Activated CD4-positive, alpha-beta memory T cell treated with anti-CD3 and anti-CD28 coated beads for 36 hours (primary cell): ENCODE measurements at regions of chr20 and their contacts with region 1.

Region 1: DNA sequence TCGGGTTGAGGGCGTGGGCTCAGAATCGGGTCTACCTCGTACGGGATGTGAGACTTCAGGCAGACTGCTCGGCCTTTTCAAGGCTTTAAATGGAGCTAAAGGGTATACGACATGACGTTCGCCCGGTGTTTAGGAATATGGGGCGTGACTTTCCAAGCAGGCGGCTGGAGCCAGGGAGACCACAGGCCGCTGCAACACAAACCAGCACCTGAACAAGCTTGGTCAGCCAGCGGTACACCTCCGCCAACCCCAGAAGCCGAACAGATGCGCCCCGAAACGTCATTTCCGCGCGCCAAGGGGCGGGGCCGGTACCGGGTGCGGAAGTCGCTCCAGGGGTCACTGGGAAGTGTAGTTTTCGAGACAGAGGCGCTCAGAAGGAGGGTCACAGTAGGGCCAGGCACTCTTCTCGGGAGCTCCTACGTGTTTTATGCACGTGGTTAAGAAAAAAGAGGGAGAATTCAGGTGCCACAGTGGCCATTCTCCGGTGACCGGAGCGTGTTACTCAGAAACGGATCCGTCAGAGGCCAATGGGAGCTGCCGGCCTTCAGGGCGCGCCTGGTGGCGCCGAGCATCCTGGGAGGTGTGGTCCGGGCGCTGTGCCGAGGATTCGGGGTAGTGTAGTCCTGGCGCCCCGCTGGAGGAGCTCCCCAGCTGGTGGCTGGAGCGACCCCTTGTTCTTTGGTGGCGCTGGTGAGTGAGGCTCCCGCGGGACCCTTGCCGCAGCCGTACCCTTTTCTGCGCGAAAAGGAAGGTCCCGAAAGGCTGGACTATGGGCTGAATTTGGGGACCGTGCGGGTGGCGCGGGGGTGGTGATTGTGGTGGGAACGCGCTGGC is at the start of gene ZNF133:
- DNase-seq: peak; percentile 98
- H3K4me3 Mint-ChIP-seq: peak within 1 kb of the TSS; percentile 96
- H3K27ac Mint-ChIP-seq: peak within 1 kb of the TSS; percentile 98
- H3K4me1 Mint-ChIP-seq: peaks cover 14% of the 10 kb centered on the region
- H3K27me3 Mint-ChIP-seq: peaks cover 17% of the 10 kb centered on the region
- total RNA-seq, gene ZNF133: 7.5 to 9.0 TPM

Region 2: GRCh38 chr20:18056174-18057100 is 231.7 kb before region 1 on chr20:
- CTCF ChIA-PET with region 1: no interaction called
- POLR2A ChIA-PET with region 1: no interaction called
- intact Hi-C with region 1: loop called (anchors 10 kb)
- DNase-seq: peak; percentile 9
- H3K4me3 Mint-ChIP-seq: peak overlapping the region; percentile 45
- H3K27ac Mint-ChIP-seq: no peak overlapping the region
- H3K4me1 Mint-ChIP-seq: peaks cover 10% of the 10 kb centered on the region
- H3K27me3 Mint-ChIP-seq: peaks cover 59% of the 10 kb centered on the region

Region 3: DNA sequence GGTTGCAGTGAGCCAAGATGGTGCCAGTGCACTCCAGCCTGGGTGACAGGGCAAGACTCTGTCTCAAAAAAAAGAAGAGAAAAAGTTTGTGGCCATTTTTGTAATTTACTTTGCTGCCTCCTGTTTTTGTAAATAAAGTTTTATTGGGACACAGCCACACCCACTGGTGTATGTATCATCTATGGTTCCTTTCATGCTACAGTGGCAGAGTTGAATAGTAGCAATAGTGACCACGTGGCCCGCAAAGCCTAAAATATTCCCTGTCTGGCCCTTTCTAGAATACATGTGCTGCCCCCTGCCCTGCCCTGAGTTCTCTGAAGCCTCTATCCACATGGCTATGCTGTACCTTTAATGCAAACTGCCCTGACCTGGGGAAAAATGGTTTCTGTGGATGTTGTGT is 75.1 kb before region 1 on chr20:
- CTCF ChIA-PET with region 1: no interaction called
- POLR2A ChIA-PET with region 1: no interaction called
- intact Hi-C with region 1: no loop called
- DNase-seq: no peak
- H3K4me3 Mint-ChIP-seq: no peak overlapping the region
- H3K27ac Mint-ChIP-seq: no peak overlapping the region
- H3K4me1 Mint-ChIP-seq: no peaks in the 10 kb centered on the region
- H3K27me3 Mint-ChIP-seq: no peaks in the 10 kb centered on the region

Region 4: GRCh38 chr20:18250217-18250616 is 37.9 kb before region 1 on chr20:
- CTCF ChIA-PET with region 1: no interaction called
- POLR2A ChIA-PET with region 1: no interaction called
- intact Hi-C with region 1: no loop called
- DNase-seq: no peak
- H3K4me3 Mint-ChIP-seq: no peak overlapping the region
- H3K27ac Mint-ChIP-seq: no peak overlapping the region
- H3K4me1 Mint-ChIP-seq: no peaks in the 10 kb centered on the region
- H3K27me3 Mint-ChIP-seq: peaks cover 3% of the 10 kb centered on the region

Region 5: DNA sequence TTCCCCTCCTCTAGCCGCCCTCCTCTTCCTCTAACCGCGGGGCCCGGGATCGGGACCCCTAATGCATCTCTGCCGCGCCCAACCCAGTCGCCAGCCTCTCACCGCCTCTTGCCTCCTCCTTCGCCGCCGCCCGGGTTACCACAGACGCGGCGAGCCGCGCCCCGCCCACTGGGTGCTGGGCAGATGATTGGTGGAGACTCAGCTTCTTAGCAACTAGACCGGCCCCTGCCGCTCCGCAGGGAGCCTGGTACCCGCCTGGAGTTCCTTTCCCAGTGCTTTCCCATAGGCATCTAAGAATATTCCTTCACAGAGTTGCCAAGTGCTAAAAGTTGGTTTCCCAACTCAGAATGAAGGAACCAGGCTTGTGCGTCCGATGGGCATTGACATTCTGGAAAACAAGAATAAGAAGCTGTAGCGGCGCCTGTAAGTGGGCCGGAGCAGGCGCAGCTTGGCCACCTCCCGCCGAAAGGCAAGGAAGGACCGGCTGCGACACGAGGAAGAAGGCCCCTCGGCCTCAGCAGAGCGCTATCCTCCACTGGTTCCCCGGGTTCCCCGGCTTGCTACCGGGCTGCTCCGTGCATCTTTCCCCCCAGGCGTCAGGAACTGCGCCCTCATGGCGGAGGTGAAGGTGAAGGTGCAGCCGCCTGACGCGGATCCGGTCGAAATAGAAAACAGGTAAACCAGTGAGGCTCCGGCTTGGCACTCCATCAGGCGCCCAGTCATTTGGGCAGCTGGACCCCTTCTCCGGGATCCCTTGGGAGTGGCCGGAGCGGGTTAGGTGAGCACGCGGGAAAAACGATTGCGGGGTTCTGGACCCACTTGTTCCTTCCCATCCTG is 179.0 kb after region 1 on chr20 and contains the starts of genes DZANK1 and POLR3F:
- CTCF ChIA-PET with region 1: no interaction called
- POLR2A ChIA-PET with region 1: no interaction called
- intact Hi-C with region 1: loop called (anchors 1 kb)
- DNase-seq: peak; percentile 96
- H3K4me3 Mint-ChIP-seq: peak within 1 kb of the TSS; percentile 95
- H3K27ac Mint-ChIP-seq: peak within 1 kb of the TSS; percentile 87
- H3K4me1 Mint-ChIP-seq: peaks cover 23% of the 10 kb centered on the region
- H3K27me3 Mint-ChIP-seq: no peaks in the 10 kb centered on the region
- total RNA-seq, gene DZANK1: 1.4 to 1.6 TPM
- total RNA-seq, gene POLR3F: 11.0 to 11.3 TPM

Region 6: DNA sequence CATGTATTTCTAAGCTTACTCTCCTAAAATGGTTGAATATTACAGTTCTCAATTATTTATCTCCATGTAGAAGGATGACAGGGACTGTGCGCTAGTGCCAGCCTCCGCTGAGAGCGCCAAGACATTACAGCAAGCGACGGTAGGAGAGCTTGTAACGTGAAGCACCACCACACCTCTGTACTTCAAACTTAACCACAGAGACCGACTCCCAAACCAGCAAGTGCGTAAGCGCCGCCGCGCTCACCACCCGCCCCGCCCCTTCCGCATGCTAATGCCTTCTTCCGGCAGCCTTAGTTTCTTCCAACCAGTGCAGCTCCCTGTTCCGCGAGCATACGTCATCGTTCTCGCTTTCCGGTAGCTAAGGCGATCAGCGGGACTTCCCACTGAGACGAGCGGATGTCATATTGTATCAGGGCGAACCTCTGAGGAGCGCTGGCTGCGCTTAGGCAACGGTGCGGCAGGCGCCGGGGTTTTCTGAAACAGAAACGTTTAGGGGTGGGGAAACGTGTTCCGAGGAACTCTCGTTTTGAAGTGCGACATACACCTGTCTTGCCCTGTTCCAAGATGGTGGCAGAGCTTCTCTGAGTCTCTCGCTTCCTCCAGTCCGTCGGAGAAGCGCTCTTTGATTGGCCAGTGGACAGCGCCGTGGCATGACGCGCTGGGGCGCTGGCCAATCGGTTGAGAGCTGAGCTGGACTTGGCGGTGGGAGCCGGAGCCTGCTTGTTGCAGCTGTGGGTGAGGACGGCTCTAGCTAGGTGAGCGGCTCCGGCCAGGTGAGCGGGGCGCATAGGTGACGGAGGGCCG is 219.3 kb after region 1 on chr20 and contains the start of gene SEC23B:
- CTCF ChIA-PET with region 1: no interaction called
- POLR2A ChIA-PET with region 1: no interaction called
- intact Hi-C with region 1: loop called (anchors 1 kb)
- DNase-seq: peak; percentile 99
- H3K4me3 Mint-ChIP-seq: peak within 1 kb of the TSS; percentile 96
- H3K27ac Mint-ChIP-seq: peak within 1 kb of the TSS; percentile 97
- H3K4me1 Mint-ChIP-seq: peaks cover 40% of the 10 kb centered on the region
- H3K27me3 Mint-ChIP-seq: no peaks in the 10 kb centered on the region
- total RNA-seq, gene SEC23B: 90.6 to 97.1 TPM

Region 7: DNA sequence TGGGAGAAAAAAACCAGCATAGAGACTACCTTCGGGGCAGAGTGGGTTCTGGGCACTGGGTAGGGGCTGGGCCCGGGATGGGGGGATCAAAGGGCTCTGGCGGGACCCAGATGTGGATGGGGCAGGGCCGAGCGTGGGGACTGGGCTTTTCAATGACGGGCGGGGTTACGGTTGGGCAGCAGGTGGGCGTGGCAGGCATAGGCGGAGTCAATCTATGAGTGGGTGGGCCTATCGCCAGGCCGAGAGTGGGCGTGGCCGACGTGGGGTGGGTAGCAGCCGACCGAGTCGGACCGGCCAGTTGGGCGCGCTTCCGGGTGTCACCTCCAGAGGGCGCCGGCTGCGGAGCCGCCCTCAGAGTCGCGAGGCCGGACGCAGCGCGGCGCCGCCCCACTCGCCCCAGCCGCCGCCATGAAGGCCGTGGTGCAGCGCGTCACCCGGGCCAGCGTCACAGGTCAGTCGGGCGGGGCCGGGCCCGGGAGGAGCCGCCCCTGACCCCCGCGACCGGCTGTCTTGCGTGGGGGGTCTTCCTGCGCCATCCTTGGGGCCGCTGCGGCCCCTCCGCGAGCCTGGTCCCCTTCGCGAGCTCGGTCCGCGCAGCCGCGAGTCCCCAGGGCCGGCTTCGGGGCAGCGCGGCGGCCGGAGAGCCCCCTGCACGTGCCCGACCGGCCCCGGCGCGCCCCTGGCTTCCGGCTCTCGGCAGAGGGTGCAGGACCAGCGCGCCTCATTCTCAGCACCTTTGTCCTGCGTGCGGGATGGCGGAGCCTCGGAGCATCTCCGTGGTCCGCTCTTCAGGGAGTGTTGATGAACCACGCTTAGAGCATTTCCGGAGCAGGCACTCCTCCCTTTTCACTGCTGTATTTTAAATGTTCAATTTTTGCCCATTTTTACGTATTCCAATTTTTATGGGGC is 299.8 kb after region 1 on chr20 and contains the start of gene DTD1:
- CTCF ChIA-PET with region 1: no interaction called
- POLR2A ChIA-PET with region 1: no interaction called
- intact Hi-C with region 1: loop called (anchors 1 kb)
- DNase-seq: peak; percentile 94
- H3K4me3 Mint-ChIP-seq: peak within 1 kb of the TSS; percentile 86
- H3K27ac Mint-ChIP-seq: peak within 1 kb of the TSS; percentile 77
- H3K4me1 Mint-ChIP-seq: peaks cover 32% of the 10 kb centered on the region
- H3K27me3 Mint-ChIP-seq: peaks cover 5% of the 10 kb centered on the region
- total RNA-seq, gene DTD1: 49.2 to 55.4 TPM